ENCODE measurements at regions of chr3 and their contacts with region 1.

Region 1: DNA sequence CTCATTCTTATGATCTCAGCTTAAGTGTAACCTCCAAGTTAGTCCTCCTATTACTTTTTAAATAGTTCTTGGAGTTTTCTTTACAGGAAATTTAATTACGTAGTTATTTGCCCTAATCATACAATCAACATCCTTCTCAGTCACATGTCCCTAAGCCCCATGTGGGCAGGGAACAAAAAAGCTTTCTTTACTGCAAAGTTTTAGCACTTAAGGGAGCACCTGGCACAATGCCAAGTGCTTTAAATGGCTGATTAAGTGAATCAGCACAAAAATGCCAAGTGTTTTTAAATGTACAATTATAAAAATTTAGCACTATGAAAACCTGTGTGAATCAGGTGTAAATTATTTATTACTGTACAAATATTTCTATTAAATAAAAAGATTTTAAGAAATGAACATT is 445.3 kb downstream of the C3orf38 start:
- DNase-seq: peak in 1 of 2 donors; percentile 1
- ATAC-seq: no peak
- H3K4me3 ChIP-seq: no peak overlapping the region
- H3K4me3 Mint-ChIP-seq: no peak overlapping the region
- H3K27ac ChIP-seq: no peak overlapping the region
- H3K27ac Mint-ChIP-seq: no peak overlapping the region
- H3K4me1 ChIP-seq: no peaks in the 10 kb centered on the region
- H3K4me1 Mint-ChIP-seq: no peaks in the 10 kb centered on the region
- H3K27me3 ChIP-seq: no peaks in the 10 kb centered on the region
- H3K27me3 Mint-ChIP-seq: no peaks in the 10 kb centered on the region
- CTCF ChIP-seq: no peak

Region 2: GRCh38 chr3:88542916-88543315 is 52.1 kb before region 1 on chr3:
- intact Hi-C with region 1: loop called (anchors 10 kb)
- DNase-seq: no peak
- ATAC-seq: no peak
- H3K4me3 ChIP-seq: no peak overlapping the region
- H3K4me3 Mint-ChIP-seq: no peak overlapping the region
- H3K27ac ChIP-seq: no peak overlapping the region
- H3K27ac Mint-ChIP-seq: no peak overlapping the region
- H3K4me1 ChIP-seq: no peaks in the 10 kb centered on the region
- H3K4me1 Mint-ChIP-seq: no peaks in the 10 kb centered on the region
- H3K27me3 ChIP-seq: no peaks in the 10 kb centered on the region
- H3K27me3 Mint-ChIP-seq: no peaks in the 10 kb centered on the region
- CTCF ChIP-seq: no peak

Region 3: DNA sequence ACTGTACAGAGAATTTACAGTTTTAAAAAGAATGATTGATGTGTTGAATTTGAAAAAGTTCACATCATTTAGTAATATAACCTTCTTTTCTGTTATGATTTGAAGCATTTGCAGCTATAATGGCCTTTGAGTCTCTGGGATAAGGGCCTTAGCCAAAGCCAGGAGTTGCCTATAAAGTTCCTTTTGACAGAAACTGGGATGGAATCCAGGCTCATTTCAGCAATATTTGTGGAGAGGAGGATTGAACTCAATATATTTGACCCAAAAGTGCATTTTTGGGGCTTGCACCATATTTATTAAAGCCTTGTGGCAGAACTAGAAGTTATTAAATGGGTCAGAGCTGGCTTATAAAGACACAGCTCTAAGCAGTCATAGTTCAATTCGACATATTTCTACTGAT is 163.7 kb after region 1 on chr3:
- intact Hi-C with region 1: no loop called
- DNase-seq: no peak
- ATAC-seq: no peak
- H3K4me3 ChIP-seq: no peak overlapping the region
- H3K4me3 Mint-ChIP-seq: no peak overlapping the region
- H3K27ac ChIP-seq: no peak overlapping the region
- H3K27ac Mint-ChIP-seq: no peak overlapping the region
- H3K4me1 ChIP-seq: no peaks in the 10 kb centered on the region
- H3K4me1 Mint-ChIP-seq: no peaks in the 10 kb centered on the region
- H3K27me3 ChIP-seq: no peaks in the 10 kb centered on the region
- H3K27me3 Mint-ChIP-seq: no peaks in the 10 kb centered on the region
- CTCF ChIP-seq: no peak